Gastrocnemius medialis (tissue), 4 donors: ENCODE measurements at regions of chr6 and their contacts with region 1.

Region 1: DNA sequence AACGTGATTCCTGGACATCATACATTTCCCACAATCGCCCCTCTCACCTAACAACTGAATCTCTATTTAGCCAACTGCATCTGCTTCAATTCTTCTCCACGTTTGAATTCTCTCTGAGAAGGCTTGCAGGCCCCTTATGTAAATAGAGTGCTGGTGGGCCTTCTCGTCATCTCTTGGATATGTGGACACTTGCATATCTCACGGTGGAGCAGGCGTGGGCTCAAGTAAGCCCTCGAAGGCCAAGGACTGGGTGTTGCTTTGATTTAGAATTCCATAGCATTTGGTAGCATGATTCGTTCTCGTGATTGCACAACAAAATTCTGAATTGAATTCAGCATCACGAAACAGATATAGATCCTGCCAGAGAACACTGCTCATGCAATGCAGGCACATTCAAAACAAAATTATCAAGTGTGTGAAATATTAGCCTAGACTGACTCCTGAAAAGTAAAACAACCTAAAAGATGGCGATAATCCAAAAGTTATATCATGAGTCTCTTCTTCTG is 613.6 kb downstream of the TFAP2A start:
- DNase-seq: no peak
- ATAC-seq: no peak
- H3K4me3 ChIP-seq: no peak overlapping the region
- H3K27ac ChIP-seq: no peak overlapping the region
- H3K4me1 ChIP-seq: no peaks in the 10 kb centered on the region
- H3K27me3 ChIP-seq: no peaks in the 10 kb centered on the region
- CTCF ChIP-seq: no peak
- POLR2A ChIP-seq: no peak

Region 2: DNA sequence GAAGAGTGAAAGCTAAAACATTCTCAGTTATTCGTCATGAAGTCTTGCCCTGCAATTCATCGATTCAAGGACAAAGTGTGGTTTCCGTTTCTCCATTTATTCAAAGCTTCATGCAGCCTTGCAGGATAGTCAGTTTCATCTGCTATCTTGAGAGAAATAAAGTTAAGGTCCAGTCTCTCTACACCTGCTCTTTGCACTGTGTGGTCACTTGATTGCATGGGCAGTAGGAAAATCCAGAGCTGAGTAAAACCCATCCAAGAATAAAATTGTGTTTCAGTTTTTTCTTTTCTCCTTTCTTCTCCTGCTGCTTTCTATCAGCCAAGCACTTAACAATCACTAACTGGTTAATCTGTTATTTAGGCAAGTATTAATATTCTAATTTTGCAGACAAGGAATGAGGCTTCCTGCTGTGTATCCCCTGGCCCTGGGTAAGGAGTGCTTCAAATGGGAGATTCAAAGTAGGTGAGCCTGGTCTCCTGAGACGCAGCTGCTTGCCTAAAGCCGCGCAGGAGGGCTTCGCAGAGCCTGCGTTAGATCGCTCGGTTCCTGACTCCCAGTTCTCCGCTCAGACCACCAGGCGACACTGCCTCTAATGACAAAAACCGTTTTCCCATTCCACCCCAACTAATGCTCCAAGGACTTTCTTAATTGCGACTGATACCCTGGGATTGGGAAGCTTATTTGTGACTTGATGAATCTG is 194.7 kb before region 1 on chr6:
- in situ Hi-C with region 1: no loop called
- intact Hi-C with region 1: no loop called
- DNase-seq: no peak
- ATAC-seq: no peak
- H3K4me3 ChIP-seq: no peak overlapping the region
- H3K27ac ChIP-seq: no peak overlapping the region
- H3K4me1 ChIP-seq: no peaks in the 10 kb centered on the region
- H3K27me3 ChIP-seq: no peaks in the 10 kb centered on the region
- CTCF ChIP-seq: no peak
- POLR2A ChIP-seq: no peak

Region 3: GRCh38 chr6:9825526-9825925 is 24.2 kb after region 1 on chr6:
- in situ Hi-C with region 1: no loop called
- intact Hi-C with region 1: loop called (anchors 1 kb)
- DNase-seq: no peak
- ATAC-seq: no peak
- H3K4me3 ChIP-seq: no peak overlapping the region
- H3K27ac ChIP-seq: no peak overlapping the region
- H3K4me1 ChIP-seq: no peaks in the 10 kb centered on the region
- H3K27me3 ChIP-seq: no peaks in the 10 kb centered on the region
- CTCF ChIP-seq: no peak
- POLR2A ChIP-seq: no peak